T-cell (primary cell): ENCODE measurements at regions of chr22 and their contacts with region 1.

Region 1: GRCh38 chr22:28538922-28539321 is 140.7 kb downstream of the TTC28 start:
- DNase-seq: no peak
- ATAC-seq: no peak
- H3K4me3 ChIP-seq: no peak overlapping the region
- H3K4me3 Mint-ChIP-seq: no peak overlapping the region
- H3K27ac ChIP-seq: no peak overlapping the region
- H3K27ac Mint-ChIP-seq: no peak overlapping the region
- H3K4me1 ChIP-seq: no peaks in the 10 kb centered on the region
- H3K4me1 Mint-ChIP-seq: no peaks in the 10 kb centered on the region
- H3K27me3 ChIP-seq: no peaks in the 10 kb centered on the region
- H3K27me3 Mint-ChIP-seq: peaks cover 4 to 6% of the 10 kb centered on the region in 2 donors

Region 2: DNA sequence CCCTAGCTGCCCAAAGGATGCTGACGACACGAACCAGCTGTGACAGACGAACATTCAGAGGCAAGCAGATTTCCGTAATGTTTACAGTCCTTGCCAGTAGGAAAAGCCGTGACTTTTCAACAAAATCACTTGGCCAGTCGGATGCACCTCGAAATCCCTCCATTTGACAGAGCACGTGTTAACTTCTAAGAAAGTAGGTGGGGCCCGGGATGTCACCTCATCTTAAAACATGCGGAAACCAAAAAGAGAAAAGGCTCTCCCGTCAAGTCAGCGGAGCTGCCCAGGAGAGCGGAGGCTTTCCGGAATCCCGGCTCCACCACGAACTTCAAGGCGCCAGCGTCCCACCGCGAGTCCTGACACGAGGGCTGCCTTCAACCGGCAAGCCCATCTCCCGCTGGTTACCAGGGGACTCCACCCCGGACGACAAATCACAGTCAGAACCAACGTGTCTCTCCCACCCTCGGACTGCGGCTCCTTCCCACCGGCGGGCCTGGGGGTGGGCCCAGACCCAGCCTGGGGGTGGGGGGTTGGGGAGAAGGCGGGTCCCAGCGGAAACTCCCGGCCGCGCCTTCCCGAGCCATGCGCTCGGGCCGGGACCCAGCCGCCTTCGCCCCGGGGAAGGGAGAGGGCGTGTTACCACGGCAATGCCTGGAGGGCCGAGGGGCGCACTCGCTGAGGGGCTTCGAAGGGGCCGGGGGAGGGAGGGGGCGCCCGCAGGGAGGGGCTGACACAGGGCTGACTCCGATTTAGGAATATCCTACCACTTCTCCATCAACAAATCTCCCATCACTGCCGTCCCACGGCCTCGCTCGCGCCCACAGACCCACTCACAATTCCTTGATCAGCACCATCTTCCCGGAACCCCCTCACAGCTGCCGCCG is 620.3 kb before region 1 on chr22:
- CTCF ChIA-PET with region 1: no interaction called
- POLR2A ChIA-PET with region 1: interaction called in 1 of 2 experiments, 16 read pairs
- DNase-seq: peak in 32 of 35 experiments; percentile 5 to 58 (median 16)
- ATAC-seq: peak; percentile 6 to 26 (median 16)
- H3K4me3 ChIP-seq: peak overlapping the region; percentile 82 to 86
- H3K4me3 Mint-ChIP-seq: peak overlapping the region; percentile 94 to 99 (median 95)
- H3K27ac ChIP-seq: peak overlapping the region; percentile 62
- H3K27ac Mint-ChIP-seq: peak overlapping the region; percentile 91 to 97
- H3K4me1 ChIP-seq: peaks cover 18 to 27% of the 10 kb centered on the region in 2 experiments
- H3K4me1 Mint-ChIP-seq: peaks cover 70 to 80% (median 77%) of the 10 kb centered on the region in 3 donors
- H3K27me3 ChIP-seq: no peaks in the 10 kb centered on the region
- H3K27me3 Mint-ChIP-seq: no peaks in the 10 kb centered on the region